BJ (cell line): ENCODE measurements at regions of chr9 and their contacts with region 1.

Region 1: GRCh38 chr9:137188490-137189296 is at the starts of genes ANAPC2 and SSNA1:
- DNase-seq: peak; percentile 50
- H3K4me3 ChIP-seq: peak within 1 kb of the TSS; percentile 98
- H3K27me3 ChIP-seq: no peaks in the 10 kb centered on the region
- CTCF ChIP-seq: peak; percentile 60
- polyA plus RNA-seq, gene ANAPC2: 14.6 and 25.5 TPM in 2 replicates
- polyA plus RNA-seq, gene SSNA1: 53.8 and 81.4 TPM in 2 replicates

Region 2: GRCh38 chr9:136799854-136800657 is 388.6 kb before region 1 on chr9:
- CTCF ChIA-PET with region 1: no interaction called
- POLR2A ChIA-PET with region 1: interaction called, 11 read pairs
- DNase-seq: no peak
- H3K4me3 ChIP-seq: peak overlapping the region; percentile 31
- H3K27me3 ChIP-seq: peaks cover 25% of the 10 kb centered on the region
- CTCF ChIP-seq: no peak

Region 3: DNA sequence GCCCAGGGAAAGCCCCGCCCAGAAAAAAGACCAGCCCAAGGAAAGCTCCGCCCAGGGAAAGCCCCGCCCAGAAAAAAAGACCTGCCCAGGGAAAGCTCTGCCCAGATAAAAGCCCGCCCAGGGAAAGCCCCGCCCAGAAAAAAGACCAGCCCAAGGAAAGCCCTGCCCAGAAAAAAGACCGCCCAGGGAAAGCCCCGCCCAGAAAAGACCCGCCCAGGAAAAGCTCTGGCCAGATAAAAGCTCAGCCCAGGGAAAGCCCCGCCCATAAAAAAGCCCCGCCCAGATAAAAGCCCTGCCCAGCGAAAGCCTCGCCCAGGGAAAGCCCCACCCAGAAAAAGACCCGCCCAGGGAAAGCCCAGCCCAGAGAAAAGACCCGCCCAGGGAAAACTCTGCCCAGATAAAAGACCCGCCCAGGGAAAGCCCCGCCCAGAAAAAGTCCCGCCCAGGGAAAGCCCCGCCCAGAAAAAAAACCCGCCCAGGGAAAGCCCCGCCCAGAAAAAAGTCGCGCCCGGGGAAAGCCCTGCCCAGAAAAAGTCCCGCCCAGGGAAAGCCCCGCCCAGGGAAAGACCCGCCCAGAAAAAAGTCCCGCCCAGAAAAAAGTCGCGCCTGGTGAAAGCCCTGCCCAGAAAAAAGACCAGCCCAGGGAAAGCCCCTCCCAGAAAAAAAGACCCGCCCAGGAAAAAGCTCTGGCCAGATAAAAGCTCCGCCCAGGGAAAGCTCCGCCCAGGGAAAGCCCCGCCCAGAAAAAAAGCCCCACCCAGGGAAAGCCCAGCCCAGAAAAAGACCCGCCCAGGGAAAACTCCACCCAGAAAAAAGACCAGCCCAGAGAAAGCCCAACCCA is 37.9 kb before region 1 on chr9:
- CTCF ChIA-PET with region 1: no interaction called
- POLR2A ChIA-PET with region 1: no interaction called
- DNase-seq: no peak
- H3K4me3 ChIP-seq: no peak overlapping the region
- H3K27me3 ChIP-seq: 0 out of 2 replicates have a peak, but pooled peaks cover 3% of the 10 kb centered on the region
- CTCF ChIP-seq: no peak